HEK293 (cell line): ENCODE measurements at regions of chr17 and their contacts with region 1.

Region 1: GRCh38 chr17:7687908-7688807 is at the start of gene WRAP53:
- H3K4me3 ChIP-seq: peak within 1 kb of the TSS; percentile 93
- H3K27ac ChIP-seq: peak within 1 kb of the TSS; percentile 96
- H3K4me1 ChIP-seq: peaks cover 13% of the 10 kb centered on the region
- CTCF ChIP-seq: peak; percentile 99

Region 2: GRCh38 chr17:6660805-6661463 is 1027.2 kb before region 1 on chr17:
- CTCF ChIA-PET with region 1: no interaction called
- POLR2A ChIA-PET with region 1: no interaction called
- H3K4me3 ChIP-seq: no peak overlapping the region
- H3K27ac ChIP-seq: no peak overlapping the region
- H3K4me1 ChIP-seq: no peaks in the 10 kb centered on the region
- CTCF ChIP-seq: no peak

Region 3: DNA sequence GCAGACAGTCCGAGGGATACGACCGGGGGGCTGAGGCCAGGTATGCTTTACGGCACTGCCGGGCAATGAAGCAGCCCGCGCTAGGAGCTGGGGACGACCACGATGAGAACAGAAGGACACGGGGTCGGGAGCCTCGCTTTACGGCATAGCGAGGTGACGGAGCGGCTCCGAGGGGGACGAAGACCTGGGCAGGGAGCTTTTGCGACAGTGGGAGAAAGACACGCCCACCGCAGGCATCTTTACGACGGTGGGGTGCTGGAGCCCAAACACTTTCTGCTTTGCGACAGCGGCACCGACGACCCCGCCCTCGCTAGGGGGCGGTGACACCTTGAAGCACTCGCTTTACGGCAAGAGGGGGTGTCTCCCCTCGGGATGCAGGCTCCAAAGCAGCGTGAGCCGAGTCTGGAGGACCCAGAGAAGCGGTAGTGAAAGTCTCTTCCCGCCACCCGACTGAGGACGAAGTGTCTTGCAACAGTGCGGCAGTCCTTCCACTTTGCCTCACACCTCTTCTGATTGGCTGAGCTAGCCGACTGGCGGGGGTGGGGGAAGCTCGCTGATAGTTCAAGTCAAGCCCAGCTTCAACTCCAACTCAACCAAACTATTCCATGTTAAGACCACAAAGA is 358.7 kb before region 1 on chr17:
- CTCF ChIA-PET with region 1: no interaction called
- POLR2A ChIA-PET with region 1: interaction called, 22 read pairs
- H3K4me3 ChIP-seq: peak overlapping the region; percentile 64
- H3K27ac ChIP-seq: peak overlapping the region; percentile 86
- H3K4me1 ChIP-seq: peaks cover 9% of the 10 kb centered on the region
- CTCF ChIP-seq: no peak

Region 4: DNA sequence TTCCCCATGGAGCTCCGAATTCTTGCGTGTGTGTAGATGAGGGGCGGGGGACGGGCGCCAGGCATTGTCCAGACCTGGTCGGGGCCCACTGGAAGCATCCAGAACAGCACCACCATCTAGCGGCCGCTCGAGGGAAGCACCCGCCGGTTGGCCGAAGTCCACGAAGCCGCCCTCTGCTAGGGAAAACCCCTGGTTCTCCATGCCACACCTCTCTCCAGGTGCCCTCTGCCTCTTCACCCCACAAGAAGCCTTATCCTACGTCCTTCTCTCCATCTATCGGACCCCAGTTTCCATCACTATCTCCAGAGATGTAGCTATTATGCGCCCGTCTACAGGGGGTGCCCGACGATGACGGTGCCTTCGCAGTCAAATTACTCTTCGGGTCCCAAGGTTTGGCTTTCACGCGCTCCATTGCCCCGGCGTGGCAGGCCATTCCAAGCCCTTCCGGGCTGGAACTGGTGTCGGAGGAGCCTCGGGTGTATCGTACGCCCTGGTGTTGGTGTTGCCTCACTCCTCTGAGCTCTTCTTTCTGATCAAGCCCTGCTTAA is 127.1 kb before region 1 on chr17:
- CTCF ChIA-PET with region 1: interaction called, 4 read pairs
- POLR2A ChIA-PET with region 1: interaction called, 17 read pairs
- H3K4me3 ChIP-seq: peak overlapping the region; percentile 85
- H3K27ac ChIP-seq: peak overlapping the region; percentile 93
- H3K4me1 ChIP-seq: peaks cover 11% of the 10 kb centered on the region
- CTCF ChIP-seq: peak; percentile 90

Region 5: DNA sequence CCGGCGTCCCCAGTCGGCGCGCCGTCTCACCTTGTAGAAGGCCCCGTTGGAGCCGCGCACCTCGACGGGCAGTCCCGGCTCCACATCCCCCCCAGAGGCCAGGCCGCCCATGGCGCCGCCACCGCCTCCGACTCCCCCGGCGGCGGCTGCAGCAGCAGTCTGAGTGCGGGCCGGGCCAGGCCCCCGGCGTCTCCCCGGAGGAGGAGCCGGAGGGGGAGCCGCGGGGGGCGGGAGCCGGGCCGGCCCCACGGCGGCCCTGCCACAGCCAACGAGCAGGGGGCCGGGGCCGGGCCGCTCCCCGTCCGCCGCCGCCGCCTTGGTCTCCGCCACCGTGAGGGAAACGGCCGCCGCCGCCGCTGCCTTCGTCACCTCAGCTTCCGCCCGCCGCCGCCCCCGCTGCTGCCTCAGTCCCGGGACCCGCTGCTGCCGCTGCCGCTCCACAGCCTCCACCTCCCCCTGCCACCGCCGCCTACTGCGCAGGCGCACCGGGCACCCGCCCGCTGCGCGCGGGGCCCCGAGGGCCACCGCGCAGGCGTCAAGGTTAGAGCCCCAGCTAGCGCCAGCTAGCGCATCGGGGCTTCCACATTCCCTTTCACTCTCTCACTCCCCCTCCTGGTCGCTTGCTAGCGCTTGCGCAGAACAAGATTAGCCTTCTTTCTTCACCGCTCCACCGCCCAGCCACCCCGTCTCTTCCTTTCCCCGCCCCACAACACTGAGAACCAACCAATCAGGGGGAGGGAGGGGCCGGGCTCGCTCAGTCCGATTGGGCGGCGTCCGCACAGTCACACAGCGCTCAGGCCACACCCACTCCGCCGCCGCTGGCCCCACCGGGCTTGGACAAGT is 73.5 kb before region 1 on chr17 and contains the start of gene FXR2:
- CTCF ChIA-PET with region 1: interaction called, 20 read pairs
- POLR2A ChIA-PET with region 1: interaction called, 42 read pairs
- H3K4me3 ChIP-seq: peak within 1 kb of the TSS; percentile 65
- H3K27ac ChIP-seq: peak within 1 kb of the TSS; percentile 97
- H3K4me1 ChIP-seq: peaks cover 22% of the 10 kb centered on the region
- CTCF ChIP-seq: peak; percentile 94

Region 6: GRCh38 chr17:7650509-7651096 is 37.6 kb before region 1 on chr17 and contains the start of gene ATP1B2:
- CTCF ChIA-PET with region 1: interaction called, 23 read pairs
- POLR2A ChIA-PET with region 1: interaction called, 113 read pairs
- H3K4me3 ChIP-seq: peak within 1 kb of the TSS; percentile 38
- H3K27ac ChIP-seq: peak within 1 kb of the TSS; percentile 39; the same call in 1 of the 2 replicates
- H3K4me1 ChIP-seq: peaks cover 5% of the 10 kb centered on the region
- CTCF ChIP-seq: no peak

Region 7: GRCh38 chr17:7703584-7704479 is 15.7 kb after region 1 on chr17:
- CTCF ChIA-PET with region 1: interaction called, 45 read pairs
- POLR2A ChIA-PET with region 1: interaction called, 111 read pairs
- H3K4me3 ChIP-seq: no peak overlapping the region
- H3K27ac ChIP-seq: no peak overlapping the region
- H3K4me1 ChIP-seq: peaks cover 14% of the 10 kb centered on the region; the same call in 1 of the 2 replicates
- CTCF ChIP-seq: no peak

Region 8: DNA sequence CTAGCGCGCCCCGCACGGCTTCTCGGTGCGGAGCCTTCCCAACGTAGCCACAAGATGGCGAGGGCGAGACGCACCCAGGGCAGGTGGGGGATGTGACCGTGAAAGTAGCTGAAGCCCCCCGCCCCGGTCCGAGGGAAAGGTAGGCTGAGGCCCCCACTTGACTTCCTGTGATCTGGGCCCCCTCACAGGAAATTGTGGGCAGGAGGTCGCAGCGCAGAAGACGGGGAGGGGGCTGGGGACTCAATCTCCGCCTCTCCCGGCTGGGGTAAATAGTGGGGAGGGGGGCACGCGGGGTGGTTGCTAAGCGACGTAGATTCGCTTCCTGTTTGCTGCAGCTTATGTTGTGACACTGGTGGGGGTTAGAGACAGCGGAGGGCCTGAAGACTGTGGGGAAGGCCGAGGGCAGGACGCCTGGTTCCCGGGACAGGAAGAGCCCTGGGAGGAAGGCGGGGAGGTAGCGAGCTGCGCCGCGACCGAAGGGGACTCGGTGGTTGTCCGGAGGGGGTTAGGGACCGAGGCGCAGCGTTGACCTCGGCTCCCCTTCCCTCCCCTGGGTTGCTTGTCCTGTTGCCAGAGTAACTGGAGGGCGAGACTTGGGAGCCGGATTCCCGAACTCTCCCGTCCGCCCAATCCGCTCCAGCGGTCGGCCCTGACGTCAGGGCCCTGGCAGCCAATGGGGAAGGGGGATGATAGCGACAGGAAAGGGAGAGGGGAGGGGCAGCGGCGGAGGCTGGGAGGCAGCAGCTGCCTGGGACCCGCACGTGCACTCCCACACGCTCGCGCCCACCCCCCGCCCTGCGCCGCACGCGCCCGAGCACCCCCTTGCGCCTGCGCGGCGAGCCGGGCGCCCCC is 147.0 kb after region 1 on chr17:
- CTCF ChIA-PET with region 1: interaction called, 3 read pairs
- POLR2A ChIA-PET with region 1: interaction called, 11 read pairs
- H3K4me3 ChIP-seq: peak overlapping the region; percentile 60
- H3K27ac ChIP-seq: peak overlapping the region; percentile 100
- H3K4me1 ChIP-seq: peaks cover 22% of the 10 kb centered on the region
- CTCF ChIP-seq: peak; percentile 97